Heart right ventricle (tissue), 16 donors: ENCODE measurements at regions of chr7 and their contacts with region 1.

Region 1: GRCh38 chr7:99155213-99155612 is 11.3 kb upstream of the SMURF1 start:
- DNase-seq: no peak
- ATAC-seq: no peak
- H3K4me3 ChIP-seq: no peak overlapping the region
- H3K27ac ChIP-seq: no peak overlapping the region
- H3K4me1 ChIP-seq: peaks cover 0 to 8% (median 0%) of the 10 kb centered on the region in 9 donors
- H3K27me3 ChIP-seq: no peaks in the 10 kb centered on the region
- CTCF ChIP-seq: no peak

Region 2: GRCh38 chr7:99040104-99040958 is 114.9 kb before region 1 on chr7:
- intact Hi-C with region 1: loop called in 1 of 10 experiments (anchors 10 kb)
- DNase-seq: peak; percentile 64 to 91
- ATAC-seq: peak; percentile 76 to 91 (median 85)
- H3K4me3 ChIP-seq: no peak overlapping the region
- H3K27ac ChIP-seq: peak overlapping the region in 6 of 10 donors; percentile 27 to 67 (median 49)
- H3K4me1 ChIP-seq: peaks cover 0 to 42% (median 9%) of the 10 kb centered on the region in 9 donors
- H3K27me3 ChIP-seq: no peaks in the 10 kb centered on the region
- CTCF ChIP-seq: peak; percentile 61 to 85 (median 77)

Region 3: GRCh38 chr7:99218406-99219184 is 63.4 kb after region 1 on chr7:
- intact Hi-C with region 1: loop called in 1 of 10 experiments (anchors 5 kb)
- DNase-seq: no peak
- ATAC-seq: no peak
- H3K4me3 ChIP-seq: no peak overlapping the region
- H3K27ac ChIP-seq: no peak overlapping the region
- H3K4me1 ChIP-seq: no peaks in the 10 kb centered on the region
- H3K27me3 ChIP-seq: peaks cover 0 to 9% (median 4%) of the 10 kb centered on the region in 7 donors
- CTCF ChIP-seq: no peak

Region 4: DNA sequence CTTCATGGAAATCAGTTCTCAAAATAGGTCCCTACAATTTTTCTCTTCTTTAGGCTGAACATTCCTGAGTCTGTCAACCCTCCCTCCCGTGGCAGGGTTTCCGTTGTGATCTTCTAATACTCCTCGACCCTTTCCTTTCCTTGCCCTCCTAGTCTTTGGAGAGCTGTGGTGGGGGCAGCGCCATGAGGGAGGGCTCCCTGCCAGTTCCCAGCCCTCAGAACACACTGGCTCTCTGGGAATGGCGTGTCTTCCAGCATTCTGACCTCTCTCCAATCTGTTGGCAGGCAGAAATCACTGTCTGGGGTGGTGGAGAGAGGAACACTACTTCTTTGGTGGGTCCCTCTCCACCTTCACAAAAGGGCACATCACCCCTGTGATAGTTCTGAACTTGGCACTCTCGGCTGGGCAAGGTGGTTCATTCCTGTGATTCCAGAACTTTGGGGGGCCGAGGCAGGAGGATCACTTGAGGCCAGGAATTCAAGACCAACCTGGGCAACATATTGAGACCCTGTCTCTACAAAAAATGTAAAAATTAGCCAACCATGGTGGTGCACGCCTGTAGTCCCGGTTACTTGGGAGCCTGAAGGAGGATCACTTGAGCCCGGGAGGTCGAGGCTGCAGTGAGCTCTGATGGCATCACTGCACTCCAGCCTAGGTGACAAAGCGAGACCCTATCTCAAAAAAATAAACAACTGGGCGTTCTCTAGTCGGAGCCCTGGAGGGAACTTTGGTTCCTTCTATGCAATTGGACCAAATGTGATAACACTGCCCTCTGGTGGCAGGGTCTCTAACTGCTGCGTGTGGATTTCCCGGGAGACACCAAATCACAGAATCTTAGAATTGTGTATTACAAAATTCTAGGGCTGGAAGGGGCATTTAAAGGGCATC is 157.3 kb after region 1 on chr7:
- intact Hi-C with region 1: loop called in 1 of 10 experiments (anchors 10 kb)
- DNase-seq: peak; percentile 58 to 62
- ATAC-seq: peak in 7 of 8 donors; percentile 43 to 88 (median 74)
- H3K4me3 ChIP-seq: peak overlapping the region in 1 of 10 donors; percentile 19
- H3K27ac ChIP-seq: no peak overlapping the region
- H3K4me1 ChIP-seq: peaks cover 0 to 9% (median 2%) of the 10 kb centered on the region in 9 donors
- H3K27me3 ChIP-seq: no peaks in the 10 kb centered on the region
- CTCF ChIP-seq: peak; percentile 85 to 92 (median 90)